Activated naive CD4-positive, alpha-beta T cell treated with anti-CD3 and anti-CD28 coated beads for 36 hours (primary cell): ENCODE measurements at regions of chr15 and their contacts with region 1.

Region 1: DNA sequence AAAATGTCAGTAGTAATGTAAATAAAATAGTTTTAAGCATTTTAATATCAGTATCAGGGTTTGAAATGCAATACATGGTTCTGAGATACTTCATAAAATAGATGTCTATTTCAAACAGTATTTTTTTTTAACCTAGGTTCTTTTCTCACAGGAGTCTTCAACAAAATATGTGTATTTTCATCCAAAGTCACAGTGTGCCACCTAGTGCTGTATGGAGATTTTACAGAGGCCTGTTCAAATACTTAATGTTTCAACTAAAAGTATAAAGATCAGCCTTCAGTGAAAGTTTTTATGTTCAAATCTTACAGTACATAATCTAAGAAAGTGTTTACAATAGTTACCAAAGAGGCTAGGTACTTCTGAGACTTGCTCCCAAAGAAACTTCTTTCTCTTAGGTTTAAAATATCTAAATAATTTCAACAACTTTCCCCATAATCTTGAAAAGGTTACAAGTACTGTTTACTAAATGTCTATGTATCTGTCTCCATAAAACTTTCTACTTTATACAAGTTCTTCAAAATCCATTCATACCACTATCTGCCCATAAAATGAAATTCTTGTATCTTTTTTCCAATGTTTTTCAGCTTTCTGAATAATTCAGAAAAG is 38.3 kb downstream of the SCAPER start:
- DNase-seq: peak; percentile 45
- H3K4me3 Mint-ChIP-seq: no peak overlapping the region
- H3K27ac Mint-ChIP-seq: no peak overlapping the region
- H3K4me1 Mint-ChIP-seq: peaks cover 40% of the 10 kb centered on the region
- H3K27me3 Mint-ChIP-seq: no peaks in the 10 kb centered on the region

Region 2: GRCh38 chr15:76150971-76151598 is 715.7 kb before region 1 on chr15:
- CTCF ChIA-PET with region 1: interaction called, 4 read pairs
- intact Hi-C with region 1: loop called (anchors 5 kb)
- DNase-seq: peak; percentile 93
- H3K4me3 Mint-ChIP-seq: no peak overlapping the region
- H3K27ac Mint-ChIP-seq: no peak overlapping the region
- H3K4me1 Mint-ChIP-seq: peaks cover 22% of the 10 kb centered on the region
- H3K27me3 Mint-ChIP-seq: peaks cover 13% of the 10 kb centered on the region

Region 3: GRCh38 chr15:76235186-76235826 is 631.5 kb before region 1 on chr15:
- CTCF ChIA-PET with region 1: interaction called, 3 read pairs
- intact Hi-C with region 1: loop called (anchors 1 kb)
- DNase-seq: no peak
- H3K4me3 Mint-ChIP-seq: no peak overlapping the region
- H3K27ac Mint-ChIP-seq: no peak overlapping the region
- H3K4me1 Mint-ChIP-seq: no peaks in the 10 kb centered on the region
- H3K27me3 Mint-ChIP-seq: no peaks in the 10 kb centered on the region

Region 4: GRCh38 chr15:76576523-76577279 is 290.1 kb before region 1 on chr15:
- CTCF ChIA-PET with region 1: no interaction called
- intact Hi-C with region 1: loop called (anchors 10 kb)
- DNase-seq: peak; percentile 35
- H3K4me3 Mint-ChIP-seq: no peak overlapping the region
- H3K27ac Mint-ChIP-seq: no peak overlapping the region
- H3K4me1 Mint-ChIP-seq: peaks cover 27% of the 10 kb centered on the region
- H3K27me3 Mint-ChIP-seq: no peaks in the 10 kb centered on the region

Region 5: GRCh38 chr15:76752549-76752948 is 114.3 kb before region 1 on chr15:
- CTCF ChIA-PET with region 1: no interaction called
- intact Hi-C with region 1: loop called (anchors 1 kb)
- DNase-seq: peak; percentile 49
- H3K4me3 Mint-ChIP-seq: no peak overlapping the region
- H3K27ac Mint-ChIP-seq: no peak overlapping the region
- H3K4me1 Mint-ChIP-seq: peaks cover 19% of the 10 kb centered on the region
- H3K27me3 Mint-ChIP-seq: no peaks in the 10 kb centered on the region